Mucosa of descending colon (tissue), 3 donors: ENCODE measurements at regions of chr5 and their contacts with region 1.

Region 1: DNA sequence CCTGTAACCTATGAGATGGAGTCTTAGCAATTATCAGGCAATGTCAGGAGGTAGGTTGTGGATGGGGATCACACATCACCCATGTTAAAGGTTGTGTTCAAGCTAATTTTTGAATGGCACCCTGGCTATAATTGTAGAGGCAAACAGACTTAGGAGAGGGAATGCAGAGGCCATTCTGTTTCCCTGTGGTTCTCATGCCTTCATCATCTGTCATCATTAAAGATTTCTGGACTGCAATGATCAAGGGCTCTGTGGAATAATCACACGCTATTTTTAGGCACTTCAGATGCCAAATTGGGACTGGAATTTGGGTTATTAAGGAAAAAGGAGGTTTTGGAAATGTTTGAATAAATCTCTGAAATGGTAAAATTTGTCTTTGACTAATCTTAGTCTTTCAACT is 1065.4 kb downstream of the TAF11L14 start:
- DNase-seq: no peak
- ATAC-seq: no peak
- H3K4me3 ChIP-seq: no peak overlapping the region
- H3K4me1 ChIP-seq: no peaks in the 10 kb centered on the region
- CTCF ChIP-seq: no peak

Region 2: DNA sequence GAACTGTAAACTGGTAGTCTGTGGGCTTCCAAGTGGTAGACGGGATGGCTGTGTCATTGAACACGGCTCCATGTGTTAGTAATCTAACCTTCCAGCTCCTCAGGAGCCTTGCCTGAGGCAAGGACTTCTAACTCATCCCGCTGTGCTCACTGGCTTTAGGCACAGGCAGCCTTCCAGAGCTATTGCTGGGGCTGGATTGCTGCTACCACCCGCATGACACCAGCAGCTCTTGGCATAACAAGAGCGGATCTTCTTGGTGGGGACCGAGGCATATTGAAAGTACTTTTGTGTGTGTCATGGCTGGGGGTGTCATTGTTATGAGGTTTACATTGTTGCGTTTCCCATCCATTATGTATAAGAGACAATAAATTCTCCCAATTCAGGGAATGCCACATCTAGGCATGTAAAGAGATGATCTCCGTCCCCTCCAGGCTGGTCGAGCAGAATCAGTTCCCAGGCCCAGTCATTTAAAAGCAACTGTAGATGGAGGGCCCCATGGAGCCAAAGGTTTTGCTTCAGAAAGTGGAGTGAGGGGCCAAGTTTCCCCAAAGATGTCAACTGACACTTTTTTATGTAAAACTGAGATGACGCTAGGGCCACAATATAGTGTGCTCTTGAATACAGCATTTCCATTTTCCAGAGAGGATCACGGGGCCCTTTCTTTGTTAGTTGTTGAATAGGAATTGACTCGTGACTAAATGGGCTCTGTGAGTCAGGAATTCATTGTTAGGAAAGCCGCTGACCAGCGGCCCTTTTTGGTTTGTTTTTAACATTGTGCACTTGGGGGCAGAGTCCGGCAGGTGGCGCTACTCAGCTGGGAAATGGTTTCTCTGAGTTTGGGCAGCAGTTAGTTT is 305.9 kb before region 1 on chr5:
- intact Hi-C with region 1: loop called in 1 of 2 experiments (anchors 5 kb)
- DNase-seq: peak in 2 of 3 donors; percentile 69 to 77
- ATAC-seq: peak; percentile 75
- H3K4me3 ChIP-seq: no peak overlapping the region
- H3K4me1 ChIP-seq: peaks cover 13% of the 10 kb centered on the region
- CTCF ChIP-seq: peak; percentile 64

Region 3: GRCh38 chr5:18523380-18523779 is 176.3 kb before region 1 on chr5:
- intact Hi-C with region 1: no loop called
- DNase-seq: no peak
- ATAC-seq: no peak
- H3K4me3 ChIP-seq: no peak overlapping the region
- H3K4me1 ChIP-seq: no peaks in the 10 kb centered on the region
- CTCF ChIP-seq: no peak